ENCODE measurements at regions of chr11 and their contacts with region 1.

Region 1: GRCh38 chr11:48109046-48109666 is 107.5 kb upstream of the OR4B1 start:
- DNase-seq: peak; percentile 43 to 50 (median 48)
- H3K4me3 ChIP-seq: peak overlapping the region in 3 of 7 experiments; percentile 6 to 45 (median 39)
- H3K27ac ChIP-seq: no peak overlapping the region
- H3K4me1 ChIP-seq: peaks cover 5 to 27% (median 8%) of the 10 kb centered on the region in 4 experiments
- H3K27me3 ChIP-seq: no peaks in the 10 kb centered on the region

Region 2: GRCh38 chr11:47731475-47731874 is 377.7 kb before region 1 on chr11:
- CTCF ChIA-PET with region 1: no interaction called
- POLR2A ChIA-PET with region 1: no interaction called
- DNase-seq: no peak
- H3K4me3 ChIP-seq: no peak overlapping the region
- H3K27ac ChIP-seq: no peak overlapping the region
- H3K4me1 ChIP-seq: no peaks in the 10 kb centered on the region
- H3K27me3 ChIP-seq: no peaks in the 10 kb centered on the region

Region 3: GRCh38 chr11:47923667-47924066 is 185.5 kb before region 1 on chr11:
- CTCF ChIA-PET with region 1: interaction called, 272 read pairs
- POLR2A ChIA-PET with region 1: no interaction called
- DNase-seq: no peak
- H3K4me3 ChIP-seq: no peak overlapping the region
- H3K27ac ChIP-seq: no peak overlapping the region
- H3K4me1 ChIP-seq: peaks cover 9 to 39% (median 33%) of the 10 kb centered on the region in 4 experiments
- H3K27me3 ChIP-seq: no peaks in the 10 kb centered on the region

Region 4: DNA sequence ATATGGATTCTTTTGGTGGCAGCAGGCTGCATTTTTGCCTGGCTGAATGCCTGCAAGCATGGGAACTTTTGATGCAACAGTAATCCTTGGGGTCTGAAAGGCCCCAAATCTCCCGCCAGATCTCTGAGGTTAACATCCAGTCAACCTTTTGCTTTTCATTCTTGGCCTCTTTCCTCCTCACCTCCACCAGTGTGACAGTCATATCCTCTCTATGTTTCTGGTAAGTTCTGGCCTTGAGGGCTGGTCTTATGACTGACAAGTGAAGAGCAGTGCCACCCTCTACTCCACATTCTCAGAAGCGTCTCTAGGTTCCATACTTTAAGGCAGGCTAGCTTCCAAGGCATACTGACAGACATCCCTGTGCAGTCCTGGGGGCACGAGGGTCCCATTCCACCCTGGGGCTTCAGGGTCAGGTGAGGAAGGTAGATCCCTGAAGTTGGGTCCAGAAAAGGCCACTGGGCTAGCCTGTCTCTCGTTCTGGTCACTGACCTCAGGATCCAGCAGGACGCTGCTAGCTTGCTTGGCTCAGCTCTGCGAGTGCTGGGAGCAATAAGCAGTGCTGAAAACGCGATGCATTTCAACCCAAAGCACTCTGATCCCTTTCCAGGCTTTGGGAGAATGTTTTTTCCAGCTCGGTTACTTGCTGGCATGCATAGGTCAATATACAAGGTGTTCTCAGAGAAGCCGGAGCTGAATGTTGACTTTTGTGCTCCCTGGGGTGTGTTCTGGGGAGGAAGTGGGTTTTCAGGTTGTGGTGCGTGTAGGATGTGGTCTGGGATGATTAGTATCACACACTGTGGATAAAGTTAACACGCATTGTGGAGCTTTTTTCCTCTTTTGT is 53.6 kb before region 1 on chr11:
- CTCF ChIA-PET with region 1: interaction called, 10 read pairs
- POLR2A ChIA-PET with region 1: no interaction called
- DNase-seq: peak; percentile 78 to 90 (median 87)
- H3K4me3 ChIP-seq: peak overlapping the region in 4 of 7 experiments; percentile 12 to 38 (median 30)
- H3K27ac ChIP-seq: no peak overlapping the region
- H3K4me1 ChIP-seq: peaks cover 20 to 50% (median 24%) of the 10 kb centered on the region in 4 experiments
- H3K27me3 ChIP-seq: no peaks in the 10 kb centered on the region

Region 5: GRCh38 chr11:48073031-48073861 is 35.9 kb before region 1 on chr11:
- CTCF ChIA-PET with region 1: no interaction called
- POLR2A ChIA-PET with region 1: no interaction called
- DNase-seq: no peak
- H3K4me3 ChIP-seq: no peak overlapping the region
- H3K27ac ChIP-seq: no peak overlapping the region
- H3K4me1 ChIP-seq: no peaks in the 10 kb centered on the region
- H3K27me3 ChIP-seq: no peaks in the 10 kb centered on the region

Region 6: DNA sequence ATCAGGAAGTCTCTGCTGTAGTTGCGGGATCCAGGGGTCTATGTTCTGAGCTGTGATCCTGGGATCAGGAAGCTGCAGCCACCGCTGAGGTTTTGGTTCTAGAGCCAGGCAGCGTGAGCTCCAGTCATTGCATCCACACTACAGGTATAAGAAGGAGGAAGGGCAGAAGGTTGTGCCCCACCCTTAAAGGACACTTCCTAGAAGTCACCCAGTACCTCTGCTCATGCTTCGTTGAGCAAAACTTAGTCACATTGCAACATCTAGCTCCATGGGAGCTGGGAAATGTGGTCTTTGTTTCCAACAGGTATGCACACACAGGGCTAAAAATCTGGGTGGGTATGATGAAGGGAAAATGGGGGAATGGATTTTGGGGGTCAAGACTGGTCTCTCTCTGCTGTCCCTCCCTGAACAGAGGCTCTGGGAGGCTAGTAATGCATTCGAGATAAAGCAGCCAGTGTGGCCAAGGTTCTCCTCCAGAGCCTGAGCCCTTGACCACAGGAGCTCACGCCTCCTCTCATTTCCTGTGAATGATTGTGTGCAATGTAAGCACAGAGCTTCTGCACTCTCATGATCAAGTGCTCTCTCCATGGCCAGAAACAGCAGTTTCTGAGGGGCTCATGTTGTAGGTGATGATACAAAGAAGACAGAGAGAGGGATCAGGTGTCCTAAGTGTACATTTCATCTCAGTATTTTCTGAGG is 20.7 kb after region 1 on chr11:
- CTCF ChIA-PET with region 1: no interaction called
- POLR2A ChIA-PET with region 1: no interaction called
- DNase-seq: no peak
- H3K4me3 ChIP-seq: no peak overlapping the region
- H3K27ac ChIP-seq: no peak overlapping the region
- H3K4me1 ChIP-seq: peaks cover 0 to 7% (median 0%) of the 10 kb centered on the region in 4 experiments
- H3K27me3 ChIP-seq: no peaks in the 10 kb centered on the region

Measured in common myeloid progenitor, CD34-positive (primary cell).